A673 (cell line): ENCODE measurements at regions of chr12 and their contacts with region 1.

Region 1: GRCh38 chr12:41250748-41251147 is 62.6 kb downstream of the PDZRN4 start:
- DNase-seq: no peak
- H3K4me3 ChIP-seq: no peak overlapping the region
- H3K27ac ChIP-seq: no peak overlapping the region
- H3K4me1 ChIP-seq: no peaks in the 10 kb centered on the region
- H3K27me3 ChIP-seq: no peaks in the 10 kb centered on the region
- CTCF ChIP-seq: no peak

Region 2: GRCh38 chr12:40963751-40964150 is 287.0 kb before region 1 on chr12:
- CTCF ChIA-PET with region 1: no interaction called
- POLR2A ChIA-PET with region 1: no interaction called
- intact Hi-C with region 1: loop called (anchors 5 kb)
- DNase-seq: no peak
- H3K4me3 ChIP-seq: no peak overlapping the region
- H3K27ac ChIP-seq: no peak overlapping the region
- H3K4me1 ChIP-seq: no peaks in the 10 kb centered on the region
- H3K27me3 ChIP-seq: no peaks in the 10 kb centered on the region
- CTCF ChIP-seq: no peak